GM18951 (cell line): ENCODE measurements at regions of chr15 and their contacts with region 1.

Region 1: DNA sequence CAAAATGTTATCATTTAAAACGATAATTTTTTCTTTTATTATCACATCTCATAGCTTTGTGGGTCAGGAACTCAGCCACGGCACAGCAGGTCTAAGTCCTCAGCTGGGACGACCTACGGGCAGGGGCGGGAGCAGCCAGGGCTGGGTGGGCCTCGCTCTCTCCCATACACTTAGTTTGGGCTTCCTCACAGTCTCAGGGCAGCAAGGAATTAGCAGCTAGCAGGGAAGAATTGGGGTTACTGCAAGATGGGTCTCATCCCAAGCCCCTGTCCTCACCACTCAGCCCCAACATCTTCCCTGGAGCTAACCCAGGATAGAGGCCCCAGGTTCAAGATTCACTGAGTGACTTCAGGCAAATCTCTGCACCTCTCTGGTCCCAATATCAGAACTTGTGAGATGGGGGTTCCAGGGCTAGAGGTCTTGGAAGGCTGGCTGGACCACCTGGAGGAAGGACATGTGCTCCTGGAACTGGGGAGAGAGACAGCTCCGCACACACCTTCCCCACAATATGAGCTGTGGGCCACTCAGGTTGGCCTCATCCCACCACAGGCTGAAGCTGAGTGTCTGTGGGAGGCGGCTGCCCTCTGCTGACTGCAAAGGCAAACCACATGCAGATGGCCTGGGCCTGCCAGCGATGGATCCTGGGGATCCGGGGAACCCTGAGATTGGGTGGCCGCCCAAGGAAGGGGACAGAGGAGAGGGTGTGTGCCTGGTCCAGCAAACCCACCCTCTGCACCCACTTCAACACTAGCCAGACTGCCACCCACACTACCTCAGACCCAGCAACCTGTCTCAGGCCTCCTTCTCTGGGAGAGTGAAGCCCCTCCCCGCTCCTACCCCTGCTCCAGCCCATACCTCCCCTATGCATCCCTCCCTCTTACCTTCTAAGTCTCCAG is 45.0 kb downstream of the CYP11A1 start:
- POLR2A ChIP-seq: no peak

Region 2: DNA sequence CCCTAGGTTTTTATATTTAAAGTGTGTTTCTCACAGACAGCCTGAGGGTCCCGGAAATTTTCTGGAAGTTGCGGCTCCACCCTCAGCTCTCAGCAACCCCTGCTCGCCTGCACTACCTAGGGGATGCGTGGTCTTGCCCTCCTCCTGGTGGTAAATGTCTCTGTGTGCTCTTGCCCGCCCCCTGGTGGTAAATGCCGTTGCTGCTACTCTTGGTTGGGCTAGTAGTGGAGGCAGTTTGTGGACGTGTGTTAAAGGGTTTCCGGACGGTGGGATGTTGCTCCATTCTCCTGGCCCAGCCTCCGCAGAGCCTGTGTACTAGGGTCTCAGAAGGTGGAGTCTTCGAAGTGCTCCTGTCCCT is 357.7 kb before region 1 on chr15:
- in situ Hi-C with region 1: loop called (anchors 25 kb)
- POLR2A ChIP-seq: no peak

Region 3: DNA sequence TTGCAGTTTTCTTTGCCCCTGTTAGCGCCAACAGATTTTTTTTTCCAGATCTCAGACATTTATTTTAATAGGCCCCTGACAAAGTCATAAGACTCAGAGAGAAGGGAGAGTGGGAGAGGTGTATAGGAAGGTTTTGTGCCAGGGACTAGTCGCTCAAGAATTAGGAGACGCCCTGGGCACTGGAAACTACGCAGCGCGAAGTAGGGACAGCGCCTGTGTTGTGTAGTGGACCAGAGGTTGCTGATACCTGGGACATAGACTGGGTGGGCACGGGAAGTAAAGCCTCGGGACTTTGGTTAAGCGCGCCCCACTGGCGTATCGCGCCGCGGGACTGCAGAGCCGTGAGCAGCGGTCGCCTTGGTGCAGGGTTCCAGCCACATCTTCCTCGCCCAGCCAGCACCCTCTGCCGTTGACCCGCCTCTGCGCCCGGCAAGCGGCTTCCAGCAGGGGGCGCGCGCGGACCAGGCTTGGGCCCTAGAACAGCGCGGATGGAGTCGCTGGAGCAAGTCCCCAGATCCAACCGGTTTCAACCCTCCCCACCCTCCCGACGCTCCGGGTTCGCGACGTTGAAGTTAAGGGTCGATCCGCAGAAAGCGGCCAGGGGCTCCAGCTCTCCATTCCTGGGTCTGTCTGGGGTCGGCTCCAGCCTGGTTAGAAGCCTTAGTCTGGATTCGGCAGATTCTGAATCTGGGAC is 195.0 kb before region 1 on chr15:
- in situ Hi-C with region 1: loop called (anchors 10 kb)
- POLR2A ChIP-seq: no peak